B cell (primary cell): ENCODE measurements at regions of chr7 and their contacts with region 1.

Region 1: GRCh38 chr7:100342765-100343164 is 15.2 kb upstream of the PILRB start:
- DNase-seq: peak; percentile 9
- ATAC-seq: no peak
- H3K4me3 ChIP-seq: no peak overlapping the region
- H3K4me3 Mint-ChIP-seq: peak overlapping the region; percentile 41
- H3K27ac ChIP-seq: peak overlapping the region in 1 of 2 donors; percentile 63
- H3K27ac Mint-ChIP-seq: peak overlapping the region; percentile 87
- H3K4me1 ChIP-seq: peaks cover 18 to 29% of the 10 kb centered on the region in 2 donors
- H3K4me1 Mint-ChIP-seq: peaks cover 45% of the 10 kb centered on the region
- H3K27me3 ChIP-seq: no peaks in the 10 kb centered on the region
- H3K27me3 Mint-ChIP-seq: no peaks in the 10 kb centered on the region
- CTCF ChIP-seq: no peak

Region 2: DNA sequence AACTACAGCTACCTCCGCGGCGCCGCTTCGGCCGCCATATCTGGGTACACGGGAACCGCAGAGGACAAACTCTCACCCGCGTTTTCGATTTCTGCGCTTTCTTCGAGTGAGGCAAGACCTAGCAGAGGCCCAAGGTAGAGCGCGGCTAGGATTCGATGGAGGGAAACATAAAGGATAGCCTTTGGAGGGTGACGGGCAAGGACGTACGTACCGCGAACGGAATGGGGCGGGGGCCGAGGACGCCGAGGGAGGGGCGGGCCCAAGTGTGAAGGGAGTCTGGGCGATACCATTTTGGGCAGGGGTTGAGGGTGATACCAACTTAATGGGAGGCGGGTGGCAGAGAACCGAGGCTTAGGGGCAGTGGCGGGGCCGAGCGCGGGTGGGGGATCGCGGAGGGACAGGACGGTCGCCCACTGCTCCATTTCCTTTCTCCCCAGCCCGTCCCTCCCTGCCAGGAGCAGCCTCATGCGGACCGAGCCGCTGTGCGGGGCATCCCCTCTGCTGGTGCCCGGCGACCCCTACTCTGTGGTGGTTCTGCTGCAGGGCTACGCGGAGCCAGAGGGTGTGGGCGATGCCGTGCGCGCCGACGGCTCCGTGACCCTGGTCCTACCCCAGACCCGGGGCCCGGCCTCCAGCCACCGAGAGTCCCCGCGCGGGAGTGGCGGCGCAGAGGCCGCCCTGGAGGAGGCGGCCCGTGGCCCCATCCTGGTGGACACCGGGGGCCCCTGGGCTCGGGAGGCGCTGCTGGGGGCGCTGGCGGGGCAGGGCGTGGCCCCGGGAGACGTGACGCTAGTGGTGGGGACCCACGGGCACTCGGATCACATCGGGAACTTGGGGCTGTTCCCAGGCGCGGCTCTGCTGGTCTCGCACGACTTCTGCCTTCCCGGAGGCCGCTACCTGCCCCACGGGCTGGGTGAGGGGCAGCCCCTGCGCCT is 215.6 kb before region 1 on chr7 and contains the start of gene MBLAC1:
- CTCF ChIA-PET with region 1: interaction called, 66 read pairs
- POLR2A ChIA-PET with region 1: no interaction called
- intact Hi-C with region 1: loop called (anchors 1 kb)
- DNase-seq: peak; percentile 97
- ATAC-seq: peak; percentile 83
- H3K4me3 ChIP-seq: peak within 1 kb of the TSS; percentile 54 to 84 (median 78)
- H3K4me3 Mint-ChIP-seq: peak within 1 kb of the TSS; percentile 100
- H3K27ac ChIP-seq: peak within 1 kb of the TSS; percentile 83 to 95
- H3K27ac Mint-ChIP-seq: peak within 1 kb of the TSS; percentile 100
- H3K4me1 ChIP-seq: peaks cover 20 to 36% of the 10 kb centered on the region in 2 donors
- H3K4me1 Mint-ChIP-seq: peaks cover 31% of the 10 kb centered on the region
- H3K27me3 ChIP-seq: no peaks in the 10 kb centered on the region
- H3K27me3 Mint-ChIP-seq: no peaks in the 10 kb centered on the region
- CTCF ChIP-seq: no peak
- total RNA-seq, gene MBLAC1: 4.5 TPM in 2 replicates

Region 3: DNA sequence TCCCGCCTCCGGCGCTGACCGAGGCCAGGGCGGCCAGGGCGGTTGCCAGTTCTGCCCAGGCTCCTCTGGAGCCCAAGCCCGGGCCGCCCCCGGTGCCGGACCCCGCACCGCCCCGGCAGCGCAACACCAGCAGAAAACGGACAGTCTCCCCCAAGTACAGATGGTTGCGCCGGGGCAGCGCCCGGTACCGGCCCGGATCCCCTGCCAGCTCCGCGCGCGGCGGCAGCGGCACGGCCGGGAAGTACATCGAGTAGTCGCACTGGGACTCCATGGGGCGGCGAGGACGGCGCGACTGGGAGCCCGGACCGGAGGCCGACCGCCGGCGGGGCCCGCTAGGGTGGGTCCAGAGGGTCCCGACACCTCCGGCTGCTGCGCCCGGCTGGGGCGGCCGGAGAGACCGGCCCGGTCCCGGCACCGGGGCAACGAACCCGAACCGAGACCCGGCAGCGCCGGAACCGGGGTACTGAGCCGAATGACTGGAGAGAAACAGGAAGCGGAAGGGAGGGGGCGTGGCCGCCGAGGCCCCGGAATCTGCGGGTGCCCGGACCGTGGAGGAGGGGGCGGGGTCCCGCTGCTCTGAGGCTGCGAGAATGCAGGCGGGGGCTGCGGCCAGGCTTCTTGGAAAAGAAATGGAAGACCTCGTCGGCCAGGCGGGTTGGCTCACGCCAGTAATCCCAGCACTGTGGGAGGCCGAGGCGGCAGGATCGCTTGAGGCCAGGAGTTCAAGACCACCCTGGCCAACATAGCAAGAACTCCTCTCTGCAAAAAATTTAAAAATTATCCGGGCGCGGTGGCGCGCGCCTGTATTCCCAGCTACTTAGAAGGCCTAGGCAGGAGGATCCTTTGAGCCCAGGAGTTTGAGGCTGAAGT is 184.3 kb before region 1 on chr7 and contains the start of gene TRAPPC14:
- CTCF ChIA-PET with region 1: no interaction called
- POLR2A ChIA-PET with region 1: no interaction called
- intact Hi-C with region 1: loop called (anchors 5 kb)
- DNase-seq: peak; percentile 93
- ATAC-seq: peak; percentile 93
- H3K4me3 ChIP-seq: peak within 1 kb of the TSS; percentile 56 to 95 (median 73)
- H3K4me3 Mint-ChIP-seq: peak within 1 kb of the TSS; percentile 89
- H3K27ac ChIP-seq: peak within 1 kb of the TSS; percentile 68 to 84
- H3K27ac Mint-ChIP-seq: peak within 1 kb of the TSS; percentile 90
- H3K4me1 ChIP-seq: peaks cover 22 to 27% of the 10 kb centered on the region in 2 donors
- H3K4me1 Mint-ChIP-seq: peaks cover 43% of the 10 kb centered on the region
- H3K27me3 ChIP-seq: no peaks in the 10 kb centered on the region
- H3K27me3 Mint-ChIP-seq: no peaks in the 10 kb centered on the region
- CTCF ChIP-seq: no peak
- total RNA-seq, gene TRAPPC14: 71.2 and 75.8 TPM in 2 replicates

Region 4: DNA sequence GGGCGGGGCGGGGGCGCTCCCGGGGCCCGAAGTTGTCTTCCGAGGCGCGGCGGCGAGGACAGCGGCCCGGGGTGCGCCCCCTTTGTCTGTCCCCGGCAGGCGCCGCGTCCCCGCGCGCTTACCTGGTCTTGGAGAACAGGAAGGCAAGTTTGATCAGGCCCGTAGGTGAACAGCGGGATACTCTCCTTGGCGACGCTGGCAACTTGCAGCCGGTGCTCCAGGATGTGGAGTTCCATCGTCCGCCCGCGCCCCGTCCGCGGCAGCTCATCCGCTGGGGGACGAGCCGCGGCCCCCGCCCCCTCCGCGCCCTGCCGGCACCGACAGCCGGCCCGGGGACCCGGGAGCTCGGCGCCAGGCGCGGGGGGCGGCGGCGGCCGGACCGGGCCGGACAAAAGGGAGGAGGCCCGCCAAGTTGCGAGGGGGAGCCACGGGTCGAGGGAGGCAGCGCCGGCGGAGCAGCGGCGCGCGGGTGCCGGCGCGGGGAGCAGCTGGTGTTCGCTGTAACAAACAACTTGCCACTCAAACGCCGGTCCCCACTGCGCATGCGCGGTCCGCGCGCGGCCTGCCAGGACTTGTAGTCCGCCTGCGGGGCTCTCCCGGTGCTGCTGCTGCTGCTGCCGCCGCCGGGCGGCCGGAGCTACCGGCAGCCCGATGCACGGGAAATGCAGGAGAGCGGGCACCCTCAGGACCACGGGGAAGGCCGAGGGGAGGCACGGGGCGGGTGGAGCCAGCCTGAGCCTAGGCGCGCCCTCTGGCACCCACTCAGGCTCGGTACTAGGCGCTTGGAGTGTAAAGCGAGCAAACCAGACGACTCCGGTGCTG is 70.8 kb before region 1 on chr7:
- CTCF ChIA-PET with region 1: interaction called, 3 read pairs
- POLR2A ChIA-PET with region 1: no interaction called
- intact Hi-C with region 1: loop called (anchors 10 kb)
- DNase-seq: peak; percentile 96
- ATAC-seq: peak; percentile 90
- H3K4me3 ChIP-seq: peak overlapping the region in 4 of 5 experiments; percentile 42 to 63 (median 59)
- H3K4me3 Mint-ChIP-seq: peak overlapping the region; percentile 82
- H3K27ac ChIP-seq: peak overlapping the region in 1 of 2 donors; percentile 46
- H3K27ac Mint-ChIP-seq: peak overlapping the region; percentile 75
- H3K4me1 ChIP-seq: peaks cover 0 to 9% of the 10 kb centered on the region in 2 donors
- H3K4me1 Mint-ChIP-seq: peaks cover 18% of the 10 kb centered on the region
- H3K27me3 ChIP-seq: no peaks in the 10 kb centered on the region
- H3K27me3 Mint-ChIP-seq: no peaks in the 10 kb centered on the region
- CTCF ChIP-seq: peak; percentile 37

Region 5: GRCh38 chr7:100369105-100369504 is 26.3 kb after region 1 on chr7:
- CTCF ChIA-PET with region 1: interaction called, 5 read pairs
- POLR2A ChIA-PET with region 1: interaction called, 4 read pairs
- intact Hi-C with region 1: loop called (anchors 1 kb)
- DNase-seq: peak; percentile 95
- ATAC-seq: peak; percentile 84
- H3K4me3 ChIP-seq: no peak overlapping the region
- H3K4me3 Mint-ChIP-seq: peak overlapping the region; percentile 87
- H3K27ac ChIP-seq: peak overlapping the region; percentile 97 to 99
- H3K27ac Mint-ChIP-seq: peak overlapping the region; percentile 99
- H3K4me1 ChIP-seq: peaks cover 68 to 86% of the 10 kb centered on the region in 2 donors
- H3K4me1 Mint-ChIP-seq: peaks cover 81% of the 10 kb centered on the region
- H3K27me3 ChIP-seq: no peaks in the 10 kb centered on the region
- H3K27me3 Mint-ChIP-seq: no peaks in the 10 kb centered on the region
- CTCF ChIP-seq: no peak

Region 6: GRCh38 chr7:100396421-100396982 is 53.7 kb after region 1 on chr7:
- CTCF ChIA-PET with region 1: interaction called, 4 read pairs
- POLR2A ChIA-PET with region 1: no interaction called
- intact Hi-C with region 1: loop called (anchors 2 kb)
- DNase-seq: peak; percentile 86
- ATAC-seq: peak; percentile 90
- H3K4me3 ChIP-seq: peak overlapping the region in 3 of 5 experiments; percentile 1 to 37 (median 8)
- H3K4me3 Mint-ChIP-seq: peak overlapping the region; percentile 74
- H3K27ac ChIP-seq: peak overlapping the region; percentile 67 to 82
- H3K27ac Mint-ChIP-seq: peak overlapping the region; percentile 93
- H3K4me1 ChIP-seq: peaks cover 30 to 41% of the 10 kb centered on the region in 2 donors
- H3K4me1 Mint-ChIP-seq: peaks cover 49% of the 10 kb centered on the region
- H3K27me3 ChIP-seq: no peaks in the 10 kb centered on the region
- H3K27me3 Mint-ChIP-seq: no peaks in the 10 kb centered on the region
- CTCF ChIP-seq: no peak